B cell (primary cell): ENCODE measurements at regions of chr3 and their contacts with region 1.

Region 1: GRCh38 chr3:49839193-49839809 is 17.1 kb downstream of the TRAIP start:
- DNase-seq: peak; percentile 89
- ATAC-seq: peak; percentile 94
- H3K4me3 ChIP-seq: no peak overlapping the region
- H3K4me3 Mint-ChIP-seq: no peak overlapping the region
- H3K27ac ChIP-seq: no peak overlapping the region
- H3K27ac Mint-ChIP-seq: peak overlapping the region; percentile 42
- H3K4me1 ChIP-seq: peaks cover 0 to 5% of the 10 kb centered on the region in 2 donors
- H3K4me1 Mint-ChIP-seq: peaks cover 4% of the 10 kb centered on the region
- H3K27me3 ChIP-seq: no peaks in the 10 kb centered on the region
- H3K27me3 Mint-ChIP-seq: no peaks in the 10 kb centered on the region
- CTCF ChIP-seq: peak; percentile 82

Region 2: DNA sequence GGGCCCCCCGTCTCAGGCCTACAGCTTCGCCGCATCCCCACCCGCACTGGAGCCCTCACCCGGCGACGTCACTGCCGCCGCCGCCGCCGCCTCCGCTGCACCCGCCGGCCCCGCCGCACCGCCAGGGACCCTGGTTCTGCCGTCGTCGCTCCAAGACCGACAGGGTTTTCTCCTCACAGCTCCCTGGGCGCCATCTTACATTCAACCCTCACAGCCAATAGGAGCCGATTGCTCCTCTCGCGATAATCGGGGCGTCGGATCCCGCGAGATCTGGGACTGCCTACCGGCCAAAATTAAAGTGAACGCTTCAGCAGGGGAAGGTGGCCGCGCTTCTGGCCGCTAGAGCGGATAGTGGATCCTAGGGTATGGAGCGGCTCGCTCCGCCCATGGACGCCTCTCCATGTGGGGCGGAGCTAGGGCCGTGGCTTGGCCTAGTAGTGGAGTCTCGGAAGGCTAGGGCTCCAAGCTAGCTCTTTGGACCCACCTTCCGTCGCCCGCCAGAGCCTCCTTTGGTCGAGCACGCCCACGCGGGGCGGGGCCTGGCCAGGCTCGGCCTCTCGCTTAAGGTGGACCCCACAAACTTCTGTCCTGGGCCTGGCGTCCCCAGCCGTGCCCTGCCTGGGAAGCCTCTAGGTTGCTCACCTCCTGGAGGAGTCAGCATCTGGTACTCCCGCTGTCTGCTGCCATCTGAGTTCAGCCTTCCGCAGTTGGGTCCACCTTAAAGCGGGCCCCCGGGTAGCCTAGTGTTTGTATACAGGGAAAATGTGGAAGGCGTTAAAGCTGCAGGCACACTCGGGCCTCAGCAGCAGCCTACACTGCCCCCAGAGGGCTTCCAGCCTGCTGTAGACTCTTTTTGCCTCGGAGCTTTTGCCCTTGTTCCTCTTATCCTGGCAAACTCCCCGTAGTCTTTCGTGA is 745.2 kb before region 1 on chr3 and contains the start of gene QRICH1:
- CTCF ChIA-PET with region 1: no interaction called
- POLR2A ChIA-PET with region 1: no interaction called
- intact Hi-C with region 1: no loop called
- DNase-seq: peak; percentile 99
- ATAC-seq: peak; percentile 77
- H3K4me3 ChIP-seq: peak within 1 kb of the TSS; percentile 72 to 95 (median 88)
- H3K4me3 Mint-ChIP-seq: peak within 1 kb of the TSS; percentile 97
- H3K27ac ChIP-seq: peak within 1 kb of the TSS; percentile 87 to 94
- H3K27ac Mint-ChIP-seq: peak within 1 kb of the TSS; percentile 99
- H3K4me1 ChIP-seq: peaks cover 26 to 33% of the 10 kb centered on the region in 2 donors
- H3K4me1 Mint-ChIP-seq: peaks cover 37% of the 10 kb centered on the region
- H3K27me3 ChIP-seq: no peaks in the 10 kb centered on the region
- H3K27me3 Mint-ChIP-seq: no peaks in the 10 kb centered on the region
- CTCF ChIP-seq: peak; percentile 71
- total RNA-seq, gene QRICH1: 187 and 196 TPM in 2 replicates

Region 3: DNA sequence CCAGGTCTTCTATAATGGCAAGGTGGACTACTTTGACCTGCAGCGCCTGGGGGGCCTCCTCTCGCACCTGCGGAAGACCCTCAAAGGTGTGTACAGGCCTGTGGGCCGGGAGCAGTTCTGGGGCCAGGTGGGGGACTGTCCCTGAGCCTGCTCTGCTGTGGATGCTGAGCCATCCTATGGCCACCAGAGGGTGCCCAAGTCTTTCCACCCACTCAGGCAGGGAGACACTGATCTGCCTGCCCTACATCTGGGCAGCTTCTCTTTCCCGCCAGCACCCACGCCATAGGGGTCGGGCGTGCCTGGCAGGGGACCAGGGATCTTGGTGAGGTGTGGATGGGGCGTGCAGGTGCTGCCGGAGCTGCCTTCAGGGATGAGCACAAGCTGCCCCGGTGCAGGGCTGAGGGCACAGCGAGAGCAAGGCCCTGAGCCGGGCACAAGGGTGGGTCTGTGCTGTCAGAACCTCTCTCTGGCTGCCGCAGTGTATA is 135.8 kb before region 1 on chr3:
- CTCF ChIA-PET with region 1: interaction called, 40 read pairs
- POLR2A ChIA-PET with region 1: no interaction called
- intact Hi-C with region 1: no loop called
- DNase-seq: peak; percentile 81
- ATAC-seq: peak; percentile 99
- H3K4me3 ChIP-seq: no peak overlapping the region
- H3K4me3 Mint-ChIP-seq: no peak overlapping the region
- H3K27ac ChIP-seq: no peak overlapping the region
- H3K27ac Mint-ChIP-seq: peak overlapping the region; percentile 59
- H3K4me1 ChIP-seq: no peaks in the 10 kb centered on the region
- H3K4me1 Mint-ChIP-seq: peaks cover 6% of the 10 kb centered on the region
- H3K27me3 ChIP-seq: no peaks in the 10 kb centered on the region
- H3K27me3 Mint-ChIP-seq: no peaks in the 10 kb centered on the region
- CTCF ChIP-seq: peak; percentile 87

Region 4: GRCh38 chr3:49786241-49786958 is 52.9 kb before region 1 on chr3 and contains the start of gene IP6K1:
- CTCF ChIA-PET with region 1: interaction called, 6 read pairs
- POLR2A ChIA-PET with region 1: no interaction called
- intact Hi-C with region 1: loop called (anchors 10 kb)
- DNase-seq: peak; percentile 99
- ATAC-seq: peak; percentile 99
- H3K4me3 ChIP-seq: peak within 1 kb of the TSS; percentile 69 to 98 (median 88)
- H3K4me3 Mint-ChIP-seq: peak within 1 kb of the TSS; percentile 97
- H3K27ac ChIP-seq: peak within 1 kb of the TSS; percentile 94 to 95
- H3K27ac Mint-ChIP-seq: peak within 1 kb of the TSS; percentile 99
- H3K4me1 ChIP-seq: peaks cover 17 to 34% of the 10 kb centered on the region in 2 donors
- H3K4me1 Mint-ChIP-seq: peaks cover 26% of the 10 kb centered on the region
- H3K27me3 ChIP-seq: no peaks in the 10 kb centered on the region
- H3K27me3 Mint-ChIP-seq: no peaks in the 10 kb centered on the region
- CTCF ChIP-seq: no peak
- total RNA-seq, gene IP6K1: 73.1 and 77.8 TPM in 2 replicates

Region 5: DNA sequence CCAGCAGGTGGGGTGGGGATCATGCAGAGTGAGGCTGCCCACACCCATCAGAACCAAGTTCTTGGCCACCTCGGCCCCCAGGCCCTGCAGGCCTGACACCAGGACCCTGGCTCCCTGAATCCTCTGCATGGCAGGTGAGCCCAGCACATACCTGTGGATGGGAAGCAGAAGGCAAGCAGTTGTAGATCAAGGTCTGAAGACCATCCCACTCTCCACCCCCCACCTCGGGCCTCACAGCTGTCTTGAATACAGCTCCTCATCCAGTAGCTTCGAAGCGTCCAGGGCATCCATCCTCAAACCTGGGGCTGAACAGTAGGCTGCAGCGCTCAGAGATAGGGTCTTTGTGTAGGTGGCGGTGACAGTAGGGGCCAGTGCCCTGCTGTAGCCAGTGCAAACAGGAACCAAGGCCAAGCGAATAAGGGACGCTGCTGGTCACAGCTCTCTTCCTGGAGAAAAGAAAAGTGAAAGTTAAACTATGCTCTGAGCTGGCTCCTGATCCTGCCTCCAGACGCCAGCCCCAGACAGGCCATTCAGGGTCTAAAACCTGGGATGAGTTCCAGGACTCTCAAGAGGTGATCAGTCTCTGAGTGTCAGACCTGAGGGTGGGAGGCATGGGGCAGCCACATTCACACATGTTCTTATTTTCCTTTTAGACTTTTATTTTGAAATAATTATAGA is 25.7 kb before region 1 on chr3 and contains the start of gene UBA7:
- CTCF ChIA-PET with region 1: interaction called, 547 read pairs
- POLR2A ChIA-PET with region 1: interaction called, 10 read pairs
- intact Hi-C with region 1: no loop called
- DNase-seq: peak; percentile 70
- ATAC-seq: peak; percentile 95
- H3K4me3 ChIP-seq: peak within 1 kb of the TSS; percentile 48 to 93 (median 78)
- H3K4me3 Mint-ChIP-seq: peak within 1 kb of the TSS; percentile 99
- H3K27ac ChIP-seq: peak within 1 kb of the TSS; percentile 68 to 92
- H3K27ac Mint-ChIP-seq: peak within 1 kb of the TSS; percentile 99
- H3K4me1 ChIP-seq: peaks cover 26 to 47% of the 10 kb centered on the region in 2 donors
- H3K4me1 Mint-ChIP-seq: peaks cover 52% of the 10 kb centered on the region
- H3K27me3 ChIP-seq: no peaks in the 10 kb centered on the region
- H3K27me3 Mint-ChIP-seq: no peaks in the 10 kb centered on the region
- CTCF ChIP-seq: no peak
- total RNA-seq, gene UBA7: 418 and 436 TPM in 2 replicates

Region 6: DNA sequence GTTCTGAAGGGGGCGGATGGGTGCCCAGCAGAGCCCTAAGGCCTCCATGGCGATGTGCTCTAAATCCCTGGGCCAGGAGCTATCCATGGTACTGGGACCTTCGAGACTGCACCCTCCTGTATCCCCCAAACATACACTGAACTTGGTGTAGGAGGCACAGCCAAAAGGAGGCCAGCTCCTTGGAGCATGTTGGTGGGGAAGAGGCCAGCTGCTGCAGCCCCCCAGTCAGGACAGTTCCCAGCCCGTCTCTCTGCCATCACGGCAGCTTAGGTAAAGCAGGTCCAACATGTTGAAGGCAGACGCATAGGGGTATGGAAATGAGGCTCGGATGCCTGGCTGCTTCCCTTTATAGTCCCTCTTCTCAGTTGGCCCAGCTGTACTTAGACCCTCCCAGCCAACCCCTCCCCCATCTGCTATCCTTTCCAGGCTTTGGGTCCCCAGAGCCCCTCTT is 28.6 kb after region 1 on chr3:
- CTCF ChIA-PET with region 1: interaction called, 11 read pairs
- POLR2A ChIA-PET with region 1: no interaction called
- intact Hi-C with region 1: no loop called
- DNase-seq: no peak
- ATAC-seq: no peak
- H3K4me3 ChIP-seq: no peak overlapping the region
- H3K4me3 Mint-ChIP-seq: peak overlapping the region; percentile 39
- H3K27ac ChIP-seq: no peak overlapping the region
- H3K27ac Mint-ChIP-seq: no peak overlapping the region
- H3K4me1 ChIP-seq: peaks cover 12 to 15% of the 10 kb centered on the region in 2 donors
- H3K4me1 Mint-ChIP-seq: no peaks in the 10 kb centered on the region
- H3K27me3 ChIP-seq: peaks cover 0 to 56% (median 20%) of the 10 kb centered on the region in 4 experiments
- H3K27me3 Mint-ChIP-seq: peaks cover 41% of the 10 kb centered on the region
- CTCF ChIP-seq: no peak

Region 7: DNA sequence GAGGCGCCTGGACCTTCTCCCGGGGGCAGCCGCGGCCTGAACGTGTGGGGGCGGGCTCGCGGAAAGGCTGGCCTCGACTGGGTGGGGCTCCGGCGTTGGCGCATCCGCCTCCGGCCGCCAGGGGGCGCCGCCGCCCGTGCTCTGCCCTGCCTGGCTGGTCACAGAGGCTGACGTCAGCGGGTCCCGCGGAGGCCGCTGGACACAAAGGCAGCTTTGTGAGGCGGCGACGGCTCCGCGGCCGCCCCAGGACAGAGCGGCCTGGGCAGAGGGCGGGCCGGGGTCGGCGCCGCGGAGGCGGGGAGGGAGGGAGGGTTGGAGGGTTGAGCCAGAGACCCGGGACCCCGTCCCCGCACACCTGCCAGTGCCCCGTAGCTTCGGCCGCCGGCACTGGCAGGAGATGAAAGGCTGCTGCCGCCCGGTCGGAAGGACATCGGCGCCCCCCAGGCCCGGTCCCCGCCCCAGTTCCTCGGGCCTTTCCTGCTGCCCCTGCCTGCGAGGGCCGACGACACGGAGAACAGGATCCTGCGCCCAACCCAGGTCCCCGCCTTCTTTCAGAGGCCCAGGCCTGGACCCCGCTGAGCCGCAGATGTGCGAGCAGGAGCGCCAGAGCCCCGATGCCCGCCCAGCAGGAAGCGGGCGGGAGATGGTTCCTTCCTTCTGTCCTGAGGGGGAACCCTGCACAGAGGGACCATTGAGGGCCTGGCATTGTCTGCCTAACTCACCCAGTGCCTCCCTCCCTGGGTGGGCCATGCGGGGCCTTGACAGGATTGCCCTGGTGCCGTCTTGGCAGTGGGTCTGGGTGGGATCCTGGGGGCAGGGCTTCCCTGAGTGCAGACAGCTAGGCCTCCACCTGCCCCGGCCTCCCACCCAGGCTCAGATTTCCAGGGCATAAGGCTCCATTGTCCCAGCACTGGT is 421.0 kb after region 1 on chr3:
- CTCF ChIA-PET with region 1: no interaction called
- POLR2A ChIA-PET with region 1: no interaction called
- intact Hi-C with region 1: no loop called
- DNase-seq: peak; percentile 90
- ATAC-seq: peak; percentile 93
- H3K4me3 ChIP-seq: peak overlapping the region in 4 of 5 experiments; percentile 48 to 58 (median 54)
- H3K4me3 Mint-ChIP-seq: peak overlapping the region; percentile 77
- H3K27ac ChIP-seq: peak overlapping the region; percentile 44 to 79
- H3K27ac Mint-ChIP-seq: peak overlapping the region; percentile 80
- H3K4me1 ChIP-seq: peaks cover 12 to 17% of the 10 kb centered on the region in 2 donors
- H3K4me1 Mint-ChIP-seq: peaks cover 12% of the 10 kb centered on the region
- H3K27me3 ChIP-seq: peaks cover 0 to 5% (median 0%) of the 10 kb centered on the region in 4 experiments
- H3K27me3 Mint-ChIP-seq: no peaks in the 10 kb centered on the region
- CTCF ChIP-seq: peak; percentile 93